Activated CD8-positive, alpha-beta T cell treated with anti-CD3 and anti-CD28 coated beads for 36 hours (primary cell): ENCODE measurements at regions of chr16 and their contacts with region 1.

Region 1: GRCh38 chr16:46673320-46674013 is 15.5 kb downstream of the VPS35 start:
- DNase-seq: peak; percentile 66
- ATAC-seq: peak; percentile 96
- H3K4me3 Mint-ChIP-seq: no peak overlapping the region
- H3K27ac Mint-ChIP-seq: no peak overlapping the region
- H3K4me1 Mint-ChIP-seq: no peaks in the 10 kb centered on the region
- H3K27me3 Mint-ChIP-seq: no peaks in the 10 kb centered on the region
- CTCF ChIP-seq: peak; percentile 97

Region 2: GRCh38 chr16:46658925-46659324 is 14.5 kb before region 1 on chr16:
- CTCF ChIA-PET with region 1: interaction called, 31 read pairs
- POLR2A ChIA-PET with region 1: interaction called, 3 read pairs
- intact Hi-C with region 1: no loop called
- DNase-seq: peak; percentile 51
- ATAC-seq: peak; percentile 93
- H3K4me3 Mint-ChIP-seq: no peak overlapping the region
- H3K27ac Mint-ChIP-seq: peak overlapping the region; percentile 68
- H3K4me1 Mint-ChIP-seq: peaks cover 12% of the 10 kb centered on the region
- H3K27me3 Mint-ChIP-seq: no peaks in the 10 kb centered on the region
- CTCF ChIP-seq: no peak

Region 3: GRCh38 chr16:46908540-46909372 is 235.3 kb after region 1 on chr16:
- CTCF ChIA-PET with region 1: interaction called, 23 read pairs
- POLR2A ChIA-PET with region 1: interaction called, 3 read pairs
- intact Hi-C with region 1: loop called (anchors 5 kb)
- DNase-seq: peak; percentile 68
- ATAC-seq: peak; percentile 30
- H3K4me3 Mint-ChIP-seq: no peak overlapping the region
- H3K27ac Mint-ChIP-seq: no peak overlapping the region
- H3K4me1 Mint-ChIP-seq: peaks cover 9% of the 10 kb centered on the region
- H3K27me3 Mint-ChIP-seq: no peaks in the 10 kb centered on the region
- CTCF ChIP-seq: peak; percentile 79